PC-3 (cell line): ENCODE measurements at regions of chr4 and their contacts with region 1.

Region 1: GRCh38 chr4:84966383-84967242 is at the start of gene WDFY3:
- DNase-seq: peak; percentile 80
- ATAC-seq: peak; percentile 89
- H3K4me3 ChIP-seq: peak within 1 kb of the TSS; percentile 77
- H3K27ac ChIP-seq: peak within 1 kb of the TSS; percentile 60
- H3K4me1 ChIP-seq: peaks cover 18% of the 10 kb centered on the region
- H3K27me3 ChIP-seq: no peaks in the 10 kb centered on the region
- CTCF ChIP-seq: no peak
- total RNA-seq, gene WDFY3: 23.1 and 38.2 TPM in 2 replicates

Region 2: DNA sequence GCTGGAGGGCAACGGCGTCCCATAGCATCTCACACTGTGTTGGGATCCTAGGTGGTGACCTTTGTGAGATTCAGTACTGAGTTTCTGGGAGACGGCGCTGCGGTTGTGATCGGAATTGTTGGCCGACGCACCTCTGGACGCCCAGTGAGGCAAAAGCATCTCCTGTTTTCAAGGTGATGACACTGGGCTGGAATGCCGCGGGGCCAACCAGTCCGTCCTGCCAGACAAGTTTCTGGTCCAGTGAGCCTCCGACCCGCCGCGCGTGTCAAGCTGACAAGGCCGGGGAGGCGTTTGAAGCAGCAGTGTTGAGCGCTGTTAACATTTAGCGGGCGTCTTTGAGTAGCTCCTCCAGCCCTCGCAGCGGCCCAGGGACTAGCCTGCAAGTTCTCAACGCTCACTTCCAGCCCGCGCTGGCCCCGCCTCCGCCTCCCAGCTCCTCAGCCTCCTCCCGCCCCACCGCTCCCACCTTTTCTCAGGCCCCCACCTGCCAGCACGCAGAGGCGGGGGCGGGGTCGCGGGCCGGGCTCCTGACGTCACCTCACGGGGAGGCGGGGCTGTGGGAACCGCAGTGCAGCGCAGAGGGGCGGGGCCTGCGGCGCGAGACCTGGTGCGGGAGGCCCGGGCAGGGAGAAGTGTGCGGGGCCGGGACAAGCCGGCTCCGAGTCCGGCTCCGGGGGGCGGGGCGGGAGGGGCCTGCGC is 384.2 kb before region 1 on chr4:
- CTCF ChIA-PET with region 1: interaction called, 6 read pairs
- POLR2A ChIA-PET with region 1: no interaction called
- intact Hi-C with region 1: loop called (anchors 1 kb)
- DNase-seq: peak; percentile 91
- ATAC-seq: peak; percentile 74
- H3K4me3 ChIP-seq: peak overlapping the region; percentile 100
- H3K27ac ChIP-seq: peak overlapping the region; percentile 90
- H3K4me1 ChIP-seq: peaks cover 27% of the 10 kb centered on the region
- H3K27me3 ChIP-seq: no peaks in the 10 kb centered on the region
- CTCF ChIP-seq: no peak

Region 3: GRCh38 chr4:84750253-84750959 is 216.2 kb before region 1 on chr4:
- CTCF ChIA-PET with region 1: interaction called, 4 read pairs
- POLR2A ChIA-PET with region 1: no interaction called
- intact Hi-C with region 1: loop called (anchors 1 kb)
- DNase-seq: peak; percentile 61
- ATAC-seq: 0 out of 2 replicates have a peak, but pooled peaks have one; percentile 29
- H3K4me3 ChIP-seq: no peak overlapping the region
- H3K27ac ChIP-seq: no peak overlapping the region
- H3K4me1 ChIP-seq: no peaks in the 10 kb centered on the region
- H3K27me3 ChIP-seq: no peaks in the 10 kb centered on the region
- CTCF ChIP-seq: peak; percentile 71

Region 4: DNA sequence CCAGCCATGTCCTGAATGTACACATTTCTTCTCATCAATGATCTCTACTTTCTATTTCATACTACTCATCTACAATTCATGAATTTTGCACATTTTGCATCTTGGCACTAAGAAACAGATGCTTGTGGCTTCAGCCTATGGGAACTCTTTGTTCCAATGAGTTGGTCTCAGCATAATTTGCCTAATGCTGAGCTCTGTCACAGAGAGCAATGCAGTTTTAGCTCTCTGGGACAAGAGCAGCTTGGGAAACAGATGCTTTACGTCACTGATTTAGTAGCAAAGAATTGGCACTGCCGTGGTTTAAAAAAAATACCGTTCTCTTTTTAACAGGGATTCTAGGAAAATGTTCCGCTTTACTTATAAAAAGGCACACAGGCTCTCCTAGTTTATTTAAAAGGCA is 162.5 kb before region 1 on chr4:
- CTCF ChIA-PET with region 1: no interaction called
- POLR2A ChIA-PET with region 1: no interaction called
- intact Hi-C with region 1: loop called (anchors 5 kb)
- DNase-seq: no peak
- ATAC-seq: peak; percentile 25; the same call in 1 of the 2 replicates
- H3K4me3 ChIP-seq: peak overlapping the region; percentile 33; the same call in 1 of the 2 replicates
- H3K27ac ChIP-seq: peak overlapping the region; percentile 72
- H3K4me1 ChIP-seq: peaks cover 33% of the 10 kb centered on the region
- H3K27me3 ChIP-seq: no peaks in the 10 kb centered on the region
- CTCF ChIP-seq: no peak

Region 5: DNA sequence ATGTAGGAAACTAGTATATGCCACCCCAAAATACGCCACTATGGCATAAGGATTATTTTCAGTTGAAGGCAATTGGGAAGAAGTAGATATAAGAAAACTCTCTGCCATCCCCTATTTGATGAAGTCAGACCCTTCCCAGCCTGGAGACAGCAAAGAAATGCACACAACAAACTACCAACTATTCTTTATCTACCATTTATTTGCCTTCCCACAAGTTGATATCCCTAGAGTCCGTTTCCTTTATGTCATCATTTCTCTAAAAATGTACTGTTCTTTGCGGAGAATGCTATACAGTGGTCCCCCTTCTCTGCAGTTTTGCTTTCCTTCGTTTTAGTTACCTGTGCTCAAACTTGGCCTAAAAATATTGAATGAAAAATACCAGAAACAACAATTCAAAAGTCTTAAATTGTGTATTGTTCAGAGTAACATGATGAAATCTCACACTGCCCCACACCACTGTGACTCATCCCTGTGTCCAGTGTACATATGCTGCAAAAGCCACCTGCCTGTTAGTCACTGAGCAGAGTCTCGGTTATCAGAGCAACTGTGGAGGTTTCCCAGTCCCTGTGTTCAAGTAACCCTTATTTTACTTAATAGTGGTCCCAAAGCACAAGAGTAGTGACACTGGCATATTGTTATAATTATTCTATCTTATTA is 152.4 kb before region 1 on chr4:
- CTCF ChIA-PET with region 1: no interaction called
- POLR2A ChIA-PET with region 1: no interaction called
- intact Hi-C with region 1: loop called (anchors 2 kb)
- DNase-seq: peak; percentile 81
- ATAC-seq: peak; percentile 100
- H3K4me3 ChIP-seq: no peak overlapping the region
- H3K27ac ChIP-seq: peak overlapping the region; percentile 74
- H3K4me1 ChIP-seq: peaks cover 14% of the 10 kb centered on the region
- H3K27me3 ChIP-seq: no peaks in the 10 kb centered on the region
- CTCF ChIP-seq: no peak

Region 6: DNA sequence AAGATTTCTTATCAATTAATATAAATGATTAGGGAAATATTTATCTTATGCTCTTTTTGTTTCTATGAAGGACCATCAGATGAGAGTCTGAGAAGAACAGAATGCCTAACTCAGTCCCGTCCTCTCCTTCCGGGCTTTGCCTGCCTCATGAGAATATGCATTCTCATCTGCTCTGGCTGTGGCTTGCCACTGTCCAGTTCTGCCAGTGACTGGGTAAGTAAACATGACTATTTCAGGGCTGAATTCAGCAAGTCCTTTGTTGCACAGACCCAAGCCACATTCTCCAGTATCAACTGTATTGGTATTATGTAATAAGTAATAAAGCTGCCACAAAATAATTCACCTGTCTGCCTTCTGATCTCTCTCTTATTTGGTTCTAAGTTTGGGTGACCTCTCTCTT is 110.8 kb before region 1 on chr4:
- CTCF ChIA-PET with region 1: no interaction called
- POLR2A ChIA-PET with region 1: no interaction called
- intact Hi-C with region 1: no loop called
- DNase-seq: no peak
- ATAC-seq: peak; percentile 60
- H3K4me3 ChIP-seq: no peak overlapping the region
- H3K27ac ChIP-seq: no peak overlapping the region
- H3K4me1 ChIP-seq: peaks cover 9% of the 10 kb centered on the region; the same call in 1 of the 2 replicates
- H3K27me3 ChIP-seq: no peaks in the 10 kb centered on the region
- CTCF ChIP-seq: no peak

Region 7: DNA sequence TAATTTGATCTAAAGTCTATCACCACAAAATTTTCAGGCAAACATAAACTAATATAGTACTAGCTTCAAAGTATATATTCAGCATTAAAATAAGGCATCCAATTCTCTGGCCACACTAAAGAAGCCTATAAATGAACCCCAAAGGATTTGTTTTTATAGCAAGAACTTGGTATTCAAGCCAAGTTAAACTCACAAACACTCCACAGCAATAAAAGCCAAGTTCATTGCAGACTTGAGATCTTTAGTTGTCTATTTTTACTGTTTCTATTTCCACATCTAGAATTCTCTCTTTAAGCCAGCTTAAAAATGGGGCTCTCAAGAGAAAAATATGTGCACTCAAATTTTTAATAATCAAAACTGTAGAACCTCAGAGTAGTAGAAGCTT is 51.2 kb before region 1 on chr4:
- CTCF ChIA-PET with region 1: no interaction called
- POLR2A ChIA-PET with region 1: no interaction called
- intact Hi-C with region 1: loop called (anchors 10 kb)
- DNase-seq: no peak
- ATAC-seq: no peak
- H3K4me3 ChIP-seq: no peak overlapping the region
- H3K27ac ChIP-seq: no peak overlapping the region
- H3K4me1 ChIP-seq: peaks cover 4% of the 10 kb centered on the region
- H3K27me3 ChIP-seq: no peaks in the 10 kb centered on the region
- CTCF ChIP-seq: no peak

Region 8: DNA sequence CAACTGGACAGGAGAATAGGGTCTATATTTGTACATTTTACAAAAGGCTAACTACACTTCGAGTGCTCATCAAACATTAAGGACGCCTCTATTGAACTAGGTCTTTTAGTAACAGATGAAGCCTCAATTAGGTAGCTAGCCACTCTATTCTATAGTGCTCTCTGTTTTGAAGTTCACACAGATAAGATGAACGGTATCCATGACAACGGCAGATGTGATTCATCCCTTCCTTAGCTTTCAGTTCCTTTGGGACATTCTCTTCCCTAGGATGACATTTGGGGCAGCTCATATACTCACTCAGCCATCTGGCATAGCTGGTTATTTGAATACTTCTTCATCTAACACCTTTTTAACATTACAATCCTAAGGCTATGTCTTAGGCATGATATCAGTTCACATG is 62.3 kb after region 1 on chr4:
- CTCF ChIA-PET with region 1: no interaction called
- POLR2A ChIA-PET with region 1: no interaction called
- intact Hi-C with region 1: no loop called
- DNase-seq: no peak
- ATAC-seq: no peak
- H3K4me3 ChIP-seq: no peak overlapping the region
- H3K27ac ChIP-seq: no peak overlapping the region
- H3K4me1 ChIP-seq: no peaks in the 10 kb centered on the region
- H3K27me3 ChIP-seq: no peaks in the 10 kb centered on the region
- CTCF ChIP-seq: no peak